Right ventricle myocardium inferior (tissue), 1 donor: ENCODE measurements at regions of chr20 and their contacts with region 1.

Region 1: DNA sequence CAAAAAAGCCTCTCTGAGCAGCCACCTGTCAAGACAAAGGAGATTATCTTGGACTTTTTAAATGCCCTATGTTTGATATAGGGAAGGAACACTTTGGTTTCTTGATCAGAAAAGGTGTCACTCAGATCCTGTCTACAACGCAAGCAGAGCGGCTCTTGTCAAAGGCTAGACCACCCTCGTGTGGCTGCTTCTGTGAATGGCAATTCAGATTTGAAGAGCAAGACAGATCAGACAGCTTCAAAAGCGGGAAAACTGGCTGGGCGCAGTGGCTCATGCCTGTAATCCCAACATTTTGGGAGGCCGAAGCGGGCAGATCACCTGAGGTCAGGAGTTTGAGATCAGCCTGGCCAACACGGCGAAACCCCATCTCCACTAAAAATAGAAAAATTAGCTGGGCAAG is 10.1 kb upstream of the NXT1 start:
- DNase-seq: peak; percentile 76
- ATAC-seq: peak; percentile 78

Region 2: GRCh38 chr20:22691369-22692118 is 649.0 kb before region 1 on chr20:
- intact Hi-C with region 1: loop called (anchors 1 kb)
- DNase-seq: peak; percentile 90
- ATAC-seq: peak; percentile 87

Region 3: GRCh38 chr20:23245553-23246181 is 94.9 kb before region 1 on chr20:
- intact Hi-C with region 1: loop called (anchors 5 kb)
- DNase-seq: peak; percentile 78
- ATAC-seq: peak; percentile 61